ENCODE measurements at regions of chr15 and their contacts with region 1.

Region 1: GRCh38 chr15:82530606-82531379 is 9.5 kb downstream of the RPS17 start:
- DNase-seq: peak; percentile 63 to 78
- ATAC-seq: peak; percentile 88 to 94 (median 90)
- H3K4me3 ChIP-seq: peak overlapping the region; percentile 28
- H3K27ac ChIP-seq: no peak overlapping the region
- H3K4me1 ChIP-seq: no peaks in the 10 kb centered on the region
- H3K27me3 ChIP-seq: no peaks in the 10 kb centered on the region
- CTCF ChIP-seq: peak; percentile 70

Region 2: GRCh38 chr15:82602195-82602594 is 71.4 kb after region 1 on chr15:
- intact Hi-C with region 1: no loop called
- DNase-seq: no peak
- ATAC-seq: no peak
- H3K4me3 ChIP-seq: no peak overlapping the region
- H3K27ac ChIP-seq: no peak overlapping the region
- H3K4me1 ChIP-seq: no peaks in the 10 kb centered on the region
- H3K27me3 ChIP-seq: no peaks in the 10 kb centered on the region
- CTCF ChIP-seq: no peak

Region 3: GRCh38 chr15:82621964-82622363 is 91.2 kb after region 1 on chr15:
- intact Hi-C with region 1: no loop called
- DNase-seq: no peak
- ATAC-seq: no peak
- H3K4me3 ChIP-seq: no peak overlapping the region
- H3K27ac ChIP-seq: no peak overlapping the region
- H3K4me1 ChIP-seq: no peaks in the 10 kb centered on the region
- H3K27me3 ChIP-seq: no peaks in the 10 kb centered on the region
- CTCF ChIP-seq: no peak

Region 4: DNA sequence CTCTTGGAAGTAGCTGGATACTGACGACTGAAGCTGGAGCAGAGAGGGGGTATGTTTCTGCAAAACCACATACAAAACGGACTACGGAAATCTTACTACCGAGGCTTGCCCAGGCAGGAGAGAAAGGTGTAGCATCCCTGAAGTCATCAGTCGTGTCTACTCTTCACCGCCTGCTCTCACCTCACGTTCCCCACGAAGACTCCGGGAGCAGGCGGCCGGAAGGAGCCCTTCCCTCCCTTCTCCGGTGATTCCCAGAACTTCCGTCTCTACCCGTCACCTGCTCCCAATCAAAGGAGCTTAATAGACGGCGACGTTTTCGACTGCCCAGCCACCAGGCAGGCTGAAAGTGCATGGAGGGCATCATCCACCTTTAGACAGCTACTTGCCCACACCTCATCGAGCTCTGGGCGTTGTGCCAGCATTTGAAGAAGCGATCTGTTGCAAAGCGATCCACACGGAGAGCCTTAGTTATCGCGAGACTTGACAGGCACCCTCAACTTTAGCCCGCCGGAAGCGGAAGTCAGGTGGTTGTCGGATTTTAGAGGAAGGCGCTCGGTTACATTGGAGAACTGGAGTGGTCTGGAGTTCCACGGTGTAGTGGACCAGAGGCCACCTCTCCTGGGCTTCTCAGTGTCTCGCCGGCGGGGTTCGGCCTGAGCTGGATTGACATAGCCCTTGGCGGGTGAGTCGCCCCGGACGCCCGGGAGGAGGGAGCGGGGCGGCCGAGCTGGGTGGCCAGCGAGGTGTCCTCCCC is 455.1 kb after region 1 on chr15 and contains the start of gene RAMAC:
- intact Hi-C with region 1: loop called in 1 of 2 experiments (anchors 10 kb)
- DNase-seq: peak; percentile 91 to 96
- ATAC-seq: peak; percentile 96 to 99 (median 98)
- H3K4me3 ChIP-seq: peak within 1 kb of the TSS; percentile 71
- H3K27ac ChIP-seq: peak within 1 kb of the TSS; percentile 89
- H3K4me1 ChIP-seq: peaks cover 19% of the 10 kb centered on the region
- H3K27me3 ChIP-seq: no peaks in the 10 kb centered on the region
- CTCF ChIP-seq: no peak
- total RNA-seq, gene RAMAC: 17.0 to 21.8 (median 19.9) TPM

Measured in psoas muscle (tissue), 8 donors.